ENCODE measurements at regions of chr1 and their contacts with region 1.

Region 1: GRCh38 chr1:12067900-12068821 is 5.1 kb downstream of the TNFRSF8 start:
- DNase-seq: peak; percentile 87
- ATAC-seq: peak; percentile 80
- H3K4me3 Mint-ChIP-seq: peak overlapping the region; percentile 62
- H3K27ac Mint-ChIP-seq: peak overlapping the region; percentile 95
- H3K4me1 Mint-ChIP-seq: peaks cover 57% of the 10 kb centered on the region
- H3K27me3 Mint-ChIP-seq: peaks cover 35% of the 10 kb centered on the region

Region 2: GRCh38 chr1:11790880-11791715 is 277.1 kb before region 1 on chr1:
- CTCF ChIA-PET with region 1: no interaction called
- POLR2A ChIA-PET with region 1: interaction called, 13 read pairs
- intact Hi-C with region 1: no loop called
- DNase-seq: no peak
- ATAC-seq: no peak
- H3K4me3 Mint-ChIP-seq: no peak overlapping the region
- H3K27ac Mint-ChIP-seq: no peak overlapping the region
- H3K4me1 Mint-ChIP-seq: no peaks in the 10 kb centered on the region
- H3K27me3 Mint-ChIP-seq: no peaks in the 10 kb centered on the region

Region 3: GRCh38 chr1:12001249-12001917 is 66.8 kb before region 1 on chr1:
- CTCF ChIA-PET with region 1: no interaction called
- POLR2A ChIA-PET with region 1: no interaction called
- intact Hi-C with region 1: loop called in 1 of 2 experiments (anchors 5 kb)
- DNase-seq: peak; percentile 88
- ATAC-seq: peak; percentile 84
- H3K4me3 Mint-ChIP-seq: no peak overlapping the region
- H3K27ac Mint-ChIP-seq: peak overlapping the region; percentile 86
- H3K4me1 Mint-ChIP-seq: no peaks in the 10 kb centered on the region
- H3K27me3 Mint-ChIP-seq: no peaks in the 10 kb centered on the region

Region 4: GRCh38 chr1:12040457-12041051 is 27.6 kb before region 1 on chr1:
- CTCF ChIA-PET with region 1: interaction called, 4 read pairs
- POLR2A ChIA-PET with region 1: interaction called, 3 read pairs
- intact Hi-C with region 1: loop called in 1 of 2 experiments (anchors 1 kb)
- DNase-seq: peak; percentile 60
- ATAC-seq: peak; percentile 83
- H3K4me3 Mint-ChIP-seq: no peak overlapping the region
- H3K27ac Mint-ChIP-seq: no peak overlapping the region
- H3K4me1 Mint-ChIP-seq: peaks cover 29% of the 10 kb centered on the region
- H3K27me3 Mint-ChIP-seq: peaks cover 3% of the 10 kb centered on the region

Region 5: DNA sequence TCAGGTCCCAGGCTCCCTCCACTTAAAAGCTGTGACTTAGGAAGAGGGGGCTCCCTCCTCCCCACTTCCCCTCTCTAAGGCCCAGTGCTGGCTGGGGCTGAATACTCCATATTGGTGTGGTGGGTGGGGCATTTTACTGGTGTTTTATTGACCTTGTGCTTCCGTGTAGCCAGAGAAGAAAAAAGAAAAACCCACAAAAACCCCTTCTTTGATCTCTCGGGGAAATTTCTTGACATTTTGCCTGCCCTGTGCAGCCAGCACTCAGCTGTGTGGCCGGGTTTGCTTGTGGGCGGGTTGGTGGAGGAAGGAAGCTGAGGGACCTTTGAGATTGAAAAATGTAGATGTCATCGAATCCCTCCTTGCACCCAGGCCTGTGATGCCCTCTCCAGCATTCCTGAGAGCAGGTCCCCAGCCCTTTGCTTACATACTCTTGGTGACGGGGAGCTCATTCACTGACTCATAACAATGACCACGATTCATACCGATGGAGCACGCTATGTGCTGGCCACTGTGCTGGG is 19.7 kb after region 1 on chr1:
- CTCF ChIA-PET with region 1: interaction called, 10 read pairs
- POLR2A ChIA-PET with region 1: no interaction called
- intact Hi-C with region 1: no loop called
- DNase-seq: peak; percentile 72
- ATAC-seq: peak; percentile 62
- H3K4me3 Mint-ChIP-seq: peak overlapping the region; percentile 9
- H3K27ac Mint-ChIP-seq: peak overlapping the region; percentile 72
- H3K4me1 Mint-ChIP-seq: peaks cover 41% of the 10 kb centered on the region
- H3K27me3 Mint-ChIP-seq: no peaks in the 10 kb centered on the region

Measured in activated CD4-positive, alpha-beta T cell treated with anti-CD3 and anti-CD28 coated beads for 36 hours (primary cell).